ENCODE measurements at regions of chr2 and their contacts with region 1.

Region 1: DNA sequence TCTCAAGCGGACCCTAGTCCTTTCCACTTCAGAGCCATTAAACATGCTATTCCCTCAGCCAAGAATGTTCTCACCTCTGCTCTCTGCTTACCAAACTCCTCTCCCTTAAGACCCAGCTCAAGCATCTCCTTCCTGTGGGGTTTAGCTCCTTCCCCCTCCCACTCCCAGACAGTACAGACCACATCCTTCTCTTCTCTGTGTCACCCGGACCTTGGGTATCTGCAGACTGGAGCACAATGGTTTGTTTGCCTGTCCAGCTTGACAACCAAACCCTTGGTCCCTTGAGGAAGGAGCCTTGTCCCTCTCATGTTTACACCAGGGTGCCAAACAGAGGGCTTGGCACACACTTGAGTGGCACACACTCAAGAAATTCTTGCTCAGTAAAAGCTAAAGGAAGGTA is 4.1 kb upstream of the CD8A start:
- DNase-seq: no peak
- H3K4me3 Mint-ChIP-seq: no peak overlapping the region
- H3K27ac Mint-ChIP-seq: no peak overlapping the region
- H3K4me1 Mint-ChIP-seq: no peaks in the 10 kb centered on the region
- H3K27me3 Mint-ChIP-seq: peaks cover 10% of the 10 kb centered on the region
- CTCF ChIP-seq: no peak

Region 2: GRCh38 chr2:86623651-86624541 is 171.0 kb before region 1 on chr2 and contains the start of gene RNF103:
- CTCF ChIA-PET with region 1: no interaction called
- POLR2A ChIA-PET with region 1: no interaction called
- intact Hi-C with region 1: no loop called
- DNase-seq: peak; percentile 92
- H3K4me3 Mint-ChIP-seq: peak within 1 kb of the TSS; percentile 95
- H3K27ac Mint-ChIP-seq: peak within 1 kb of the TSS; percentile 98
- H3K4me1 Mint-ChIP-seq: peaks cover 6% of the 10 kb centered on the region
- H3K27me3 Mint-ChIP-seq: no peaks in the 10 kb centered on the region
- CTCF ChIP-seq: no peak
- total RNA-seq, gene RNF103: 12.4 and 18.4 TPM in 2 replicates

Region 3: GRCh38 chr2:86770819-86771301 is 24.0 kb before region 1 on chr2:
- CTCF ChIA-PET with region 1: no interaction called
- POLR2A ChIA-PET with region 1: no interaction called
- intact Hi-C with region 1: no loop called
- DNase-seq: no peak
- H3K4me3 Mint-ChIP-seq: no peak overlapping the region
- H3K27ac Mint-ChIP-seq: no peak overlapping the region
- H3K4me1 Mint-ChIP-seq: no peaks in the 10 kb centered on the region
- H3K27me3 Mint-ChIP-seq: no peaks in the 10 kb centered on the region
- CTCF ChIP-seq: no peak

Region 4: GRCh38 chr2:86808315-86809161 is 13.7 kb after region 1 on chr2:
- CTCF ChIA-PET with region 1: interaction called, 21 read pairs
- POLR2A ChIA-PET with region 1: no interaction called
- intact Hi-C with region 1: no loop called
- DNase-seq: peak; percentile 87
- H3K4me3 Mint-ChIP-seq: peak overlapping the region; percentile 71
- H3K27ac Mint-ChIP-seq: no peak overlapping the region
- H3K4me1 Mint-ChIP-seq: peaks cover 6% of the 10 kb centered on the region
- H3K27me3 Mint-ChIP-seq: no peaks in the 10 kb centered on the region
- CTCF ChIP-seq: peak; percentile 97

Region 5: GRCh38 chr2:86826951-86827350 is 32.1 kb after region 1 on chr2:
- CTCF ChIA-PET with region 1: no interaction called
- POLR2A ChIA-PET with region 1: no interaction called
- intact Hi-C with region 1: no loop called
- DNase-seq: no peak
- H3K4me3 Mint-ChIP-seq: no peak overlapping the region
- H3K27ac Mint-ChIP-seq: no peak overlapping the region
- H3K4me1 Mint-ChIP-seq: peaks cover under 1% of the 10 kb centered on the region
- H3K27me3 Mint-ChIP-seq: no peaks in the 10 kb centered on the region
- CTCF ChIP-seq: no peak

Measured in MCF 10A (cell line).